ENCODE measurements at regions of chr15 and their contacts with region 1.

Region 1: GRCh38 chr15:31435261-31435911 is 108.8 kb downstream of the KLF13 start:
- DNase-seq: peak; percentile 87
- ATAC-seq: peak; percentile 85
- H3K4me3 ChIP-seq: peak overlapping the region; percentile 48
- H3K27ac ChIP-seq: peak overlapping the region; percentile 95
- H3K4me1 ChIP-seq: peaks cover 50% of the 10 kb centered on the region
- H3K27me3 ChIP-seq: no peaks in the 10 kb centered on the region
- CTCF ChIP-seq: peak; percentile 85 to 100 (median 92); a peak in 5 of 6 replicates
- EP300 ChIP-seq: peak in 1 of 2 experiments; percentile 43; a peak in 1 of 4 replicates
- POLR2A ChIP-seq: peak; percentile 31
- RAD21 ChIP-seq: peak; percentile 86

Region 2: DNA sequence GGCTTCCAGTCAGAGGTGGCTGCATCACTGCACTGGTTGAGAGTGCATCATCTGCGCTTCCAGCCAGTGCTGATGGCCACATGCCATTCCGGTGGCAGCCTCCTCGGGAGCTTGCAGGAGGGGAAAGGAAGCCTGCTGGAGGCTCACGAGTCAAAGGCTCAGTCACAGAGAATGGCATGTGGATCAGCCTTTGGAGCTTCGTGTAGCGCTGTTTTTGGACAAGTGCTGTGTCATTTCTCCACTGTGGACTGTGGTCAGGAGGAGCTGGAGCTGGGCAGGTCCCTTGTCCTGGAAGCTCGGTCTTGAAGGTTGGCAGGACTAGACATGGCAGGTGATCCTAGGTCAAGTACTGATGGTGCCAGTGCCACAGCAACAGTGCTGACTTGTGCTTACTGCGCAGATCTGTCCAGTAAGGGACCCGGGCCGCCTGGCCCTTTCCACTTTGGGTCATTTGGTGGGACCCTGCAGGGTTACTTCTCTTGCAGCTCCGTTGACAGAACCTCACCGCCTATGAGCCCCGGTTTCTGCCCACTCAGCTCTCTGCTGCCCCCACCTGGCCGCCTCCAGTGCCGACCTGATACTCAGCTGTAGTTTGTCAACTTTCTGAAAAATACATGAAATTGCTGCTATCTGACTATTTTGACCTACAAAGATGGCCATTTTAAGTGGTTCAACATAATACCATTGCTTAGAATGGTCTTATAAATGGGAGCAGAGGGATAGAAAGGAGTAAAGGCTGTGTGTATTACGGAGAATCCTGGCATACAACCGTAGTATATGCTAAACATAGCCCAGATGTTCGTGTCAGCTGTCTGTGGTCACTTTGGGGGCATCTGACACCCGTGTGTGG is 306.2 kb before region 1 on chr15:
- CTCF ChIA-PET with region 1: interaction called, 12 read pairs
- POLR2A ChIA-PET with region 1: no interaction called
- RAD21 ChIA-PET with region 1: interaction called, 6 read pairs
- SMC1A ChIA-PET with region 1: no interaction called
- in situ Hi-C with region 1: no loop called
- intact Hi-C with region 1: no loop called
- DNase-seq: no peak
- ATAC-seq: peak; percentile 98
- H3K4me3 ChIP-seq: no peak overlapping the region
- H3K27ac ChIP-seq: no peak overlapping the region
- H3K4me1 ChIP-seq: no peaks in the 10 kb centered on the region
- H3K27me3 ChIP-seq: no peaks in the 10 kb centered on the region; a peak in 1 of 4 replicates
- CTCF ChIP-seq: peak; percentile 81 to 98 (median 96)
- EP300 ChIP-seq: no peak
- POLR2A ChIP-seq: no peak
- RAD21 ChIP-seq: peak; percentile 96

Region 3: GRCh38 chr15:31228985-31229826 is 206.2 kb before region 1 on chr15:
- CTCF ChIA-PET with region 1: interaction called, 12 read pairs
- POLR2A ChIA-PET with region 1: interaction called, 6 read pairs
- RAD21 ChIA-PET with region 1: interaction called, 27 read pairs
- SMC1A ChIA-PET with region 1: interaction called, 8 read pairs
- in situ Hi-C with region 1: no loop called
- intact Hi-C with region 1: loop called (anchors 5 kb)
- DNase-seq: peak; percentile 91
- ATAC-seq: peak; percentile 83
- H3K4me3 ChIP-seq: peak overlapping the region; percentile 86
- H3K27ac ChIP-seq: peak overlapping the region; percentile 80
- H3K4me1 ChIP-seq: peaks cover 37% of the 10 kb centered on the region
- H3K27me3 ChIP-seq: no peaks in the 10 kb centered on the region
- CTCF ChIP-seq: no peak
- EP300 ChIP-seq: 0 out of 4 replicates have a peak, but pooled peaks of 1 of the 2 experiments have one; percentile 27
- POLR2A ChIP-seq: peak; percentile 85
- RAD21 ChIP-seq: no peak

Region 4: DNA sequence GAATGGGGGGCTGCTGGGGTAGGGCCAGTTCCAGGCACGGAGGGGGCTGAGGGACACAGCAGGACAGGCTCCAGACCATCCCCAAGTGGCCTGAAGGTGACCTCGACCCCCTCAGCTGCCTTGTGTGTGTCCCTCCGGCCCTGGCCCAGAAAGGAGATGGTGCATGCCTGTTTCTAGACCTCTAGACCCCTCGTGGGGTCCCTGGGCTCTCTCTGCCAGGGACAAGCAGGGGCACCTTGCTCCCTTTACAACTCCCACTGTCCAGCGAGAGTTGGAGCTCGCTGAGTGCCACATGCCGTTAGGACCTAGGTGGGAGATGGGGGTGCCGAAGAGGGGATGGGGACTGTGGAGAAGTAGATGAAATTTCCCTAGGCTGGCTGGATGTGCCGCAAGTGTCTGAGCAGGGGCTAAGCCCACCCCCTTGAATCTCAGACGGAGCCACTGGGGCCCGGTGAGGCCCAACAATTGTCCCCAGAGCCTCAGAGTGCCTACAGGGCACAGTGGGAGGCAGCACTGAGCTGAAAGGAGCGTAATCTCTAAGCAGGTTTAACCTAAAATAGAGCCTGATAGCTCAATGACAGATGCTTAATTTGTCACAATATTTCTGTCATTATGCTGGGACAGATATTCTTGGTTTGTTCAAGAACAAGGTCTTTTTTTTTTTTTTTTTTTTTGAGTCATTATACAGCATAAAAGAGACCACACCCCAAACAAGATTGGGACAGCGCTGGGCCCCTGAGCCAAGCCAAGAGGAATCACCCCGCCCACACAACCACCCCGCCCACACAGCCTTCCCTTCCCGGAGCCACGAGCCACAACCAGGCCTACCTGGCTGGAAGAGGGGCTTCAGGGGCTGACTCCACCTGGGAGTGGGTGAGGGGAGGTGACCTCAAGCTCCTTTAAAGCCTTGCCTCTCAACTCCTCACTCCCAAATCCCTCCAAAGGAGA is 132.3 kb before region 1 on chr15:
- CTCF ChIA-PET with region 1: interaction called, 8 read pairs
- POLR2A ChIA-PET with region 1: interaction called, 4 read pairs
- RAD21 ChIA-PET with region 1: interaction called, 15 read pairs
- SMC1A ChIA-PET with region 1: interaction called, 8 read pairs
- in situ Hi-C with region 1: no loop called
- intact Hi-C with region 1: no loop called
- DNase-seq: no peak
- ATAC-seq: peak; percentile 76
- H3K4me3 ChIP-seq: no peak overlapping the region
- H3K27ac ChIP-seq: no peak overlapping the region
- H3K4me1 ChIP-seq: peaks cover 19% of the 10 kb centered on the region
- H3K27me3 ChIP-seq: no peaks in the 10 kb centered on the region
- CTCF ChIP-seq: peak; percentile 19 to 34 (median 31); a peak in 5 of 6 replicates
- EP300 ChIP-seq: no peak
- POLR2A ChIP-seq: no peak
- RAD21 ChIP-seq: peak; percentile 40; the same call in 1 of the 2 replicates

Region 5: GRCh38 chr15:31344823-31345605 is 90.4 kb before region 1 on chr15:
- CTCF ChIA-PET with region 1: interaction called, 11 read pairs
- POLR2A ChIA-PET with region 1: interaction called, 3 read pairs
- RAD21 ChIA-PET with region 1: interaction called, 18 read pairs
- SMC1A ChIA-PET with region 1: interaction called, 6 read pairs
- in situ Hi-C with region 1: no loop called
- intact Hi-C with region 1: no loop called
- DNase-seq: no peak
- ATAC-seq: peak; percentile 68
- H3K4me3 ChIP-seq: peak overlapping the region; percentile 80
- H3K27ac ChIP-seq: peak overlapping the region; percentile 96
- H3K4me1 ChIP-seq: peaks cover 87% of the 10 kb centered on the region
- H3K27me3 ChIP-seq: no peaks in the 10 kb centered on the region
- CTCF ChIP-seq: no peak
- EP300 ChIP-seq: no peak
- POLR2A ChIP-seq: peak; percentile 65
- RAD21 ChIP-seq: no peak

Region 6: DNA sequence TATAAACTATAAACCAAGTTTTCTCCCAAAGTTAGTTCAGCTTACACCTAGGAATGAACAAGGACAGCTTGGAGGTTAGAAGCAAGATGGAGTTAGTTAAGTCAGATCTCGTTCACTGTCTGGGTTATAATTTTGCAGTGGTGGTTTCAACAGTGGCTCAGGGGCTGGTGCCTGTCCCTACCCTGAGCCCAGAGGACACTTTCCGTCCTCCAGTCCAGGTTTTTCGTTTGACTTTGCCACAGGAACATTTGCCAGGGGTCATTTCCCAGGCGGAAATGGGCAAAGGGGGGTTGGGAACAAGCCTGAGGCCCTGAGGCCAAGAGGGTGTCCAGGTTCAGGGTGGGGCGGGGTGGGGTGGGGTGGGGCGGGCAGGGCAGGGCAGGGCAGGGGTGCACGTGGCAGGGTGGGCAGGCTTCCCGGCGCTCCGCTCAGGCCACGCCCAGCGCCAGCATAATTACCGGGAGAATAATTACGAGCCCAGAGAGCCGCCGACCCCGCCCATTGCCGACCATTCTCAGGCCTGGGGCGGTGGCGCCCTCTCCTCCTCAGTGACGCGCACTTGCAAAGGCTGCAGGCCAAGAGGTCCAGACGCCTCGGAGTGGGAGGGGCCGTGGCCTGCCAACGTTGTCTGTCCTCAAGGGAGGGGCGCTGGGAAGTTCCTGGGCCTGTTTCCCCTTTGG is 38.4 kb before region 1 on chr15:
- CTCF ChIA-PET with region 1: interaction called, 6 read pairs
- POLR2A ChIA-PET with region 1: no interaction called
- RAD21 ChIA-PET with region 1: interaction called, 8 read pairs
- SMC1A ChIA-PET with region 1: interaction called, 4 read pairs
- in situ Hi-C with region 1: no loop called
- intact Hi-C with region 1: loop called (anchors 2 kb)
- DNase-seq: no peak
- ATAC-seq: no peak
- H3K4me3 ChIP-seq: no peak overlapping the region
- H3K27ac ChIP-seq: no peak overlapping the region
- H3K4me1 ChIP-seq: peaks cover 3% of the 10 kb centered on the region; the same call in 1 of the 2 replicates
- H3K27me3 ChIP-seq: peaks cover 0 to 1% of the 10 kb centered on the region in 2 experiments; a peak in 1 of 4 replicates
- CTCF ChIP-seq: no peak
- EP300 ChIP-seq: no peak
- POLR2A ChIP-seq: no peak
- RAD21 ChIP-seq: 0 out of 2 replicates have a peak, but pooled peaks have one; percentile 17

Region 7: GRCh38 chr15:31472636-31473384 is 37.4 kb after region 1 on chr15:
- CTCF ChIA-PET with region 1: interaction called, 63 read pairs
- POLR2A ChIA-PET with region 1: interaction called, 11 read pairs
- RAD21 ChIA-PET with region 1: interaction called, 83 read pairs
- SMC1A ChIA-PET with region 1: interaction called, 14 read pairs
- in situ Hi-C with region 1: no loop called
- intact Hi-C with region 1: loop called (anchors 5 kb)
- DNase-seq: peak; percentile 79
- ATAC-seq: peak; percentile 94
- H3K4me3 ChIP-seq: peak overlapping the region; percentile 50
- H3K27ac ChIP-seq: peak overlapping the region; percentile 92
- H3K4me1 ChIP-seq: peaks cover 37% of the 10 kb centered on the region
- H3K27me3 ChIP-seq: no peaks in the 10 kb centered on the region
- CTCF ChIP-seq: 0 out of 6 replicates have a peak, but pooled peaks of 1 of the 3 experiments have one; percentile 2
- EP300 ChIP-seq: peak in 1 of 2 experiments; percentile 17; a peak in 1 of 4 replicates
- POLR2A ChIP-seq: peak; percentile 68
- RAD21 ChIP-seq: 0 out of 2 replicates have a peak, but pooled peaks have one; percentile 13

Region 8: GRCh38 chr15:31540633-31541032 is 105.2 kb after region 1 on chr15:
- CTCF ChIA-PET with region 1: no interaction called
- POLR2A ChIA-PET with region 1: no interaction called
- RAD21 ChIA-PET with region 1: no interaction called
- SMC1A ChIA-PET with region 1: no interaction called
- in situ Hi-C with region 1: no loop called
- intact Hi-C with region 1: no loop called
- DNase-seq: no peak
- ATAC-seq: no peak
- H3K4me3 ChIP-seq: no peak overlapping the region
- H3K27ac ChIP-seq: no peak overlapping the region
- H3K4me1 ChIP-seq: no peaks in the 10 kb centered on the region
- H3K27me3 ChIP-seq: no peaks in the 10 kb centered on the region; a peak in 1 of 4 replicates
- CTCF ChIP-seq: no peak
- EP300 ChIP-seq: no peak
- POLR2A ChIP-seq: no peak
- RAD21 ChIP-seq: no peak

Region 9: DNA sequence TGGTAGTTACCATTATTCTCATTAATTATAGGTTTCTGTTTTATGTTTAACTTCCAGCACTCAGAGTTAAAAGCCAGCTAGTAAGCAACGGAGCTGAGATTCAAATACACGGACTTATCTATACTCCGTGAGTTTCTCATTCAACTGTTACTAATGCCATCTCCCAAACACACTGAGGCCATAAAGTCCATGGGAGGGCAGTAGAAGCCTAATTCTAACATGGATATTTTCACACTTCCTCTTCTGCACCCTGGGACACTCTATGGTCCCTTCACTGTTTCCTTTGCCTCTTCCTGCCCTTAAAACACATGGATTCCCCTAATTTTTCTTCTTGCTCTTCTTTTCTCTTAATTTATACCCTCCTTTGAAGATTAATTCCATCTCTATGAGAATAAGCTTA is 136.3 kb after region 1 on chr15:
- CTCF ChIA-PET with region 1: no interaction called
- POLR2A ChIA-PET with region 1: no interaction called
- RAD21 ChIA-PET with region 1: no interaction called
- SMC1A ChIA-PET with region 1: no interaction called
- in situ Hi-C with region 1: no loop called
- intact Hi-C with region 1: no loop called
- DNase-seq: no peak
- ATAC-seq: no peak
- H3K4me3 ChIP-seq: no peak overlapping the region
- H3K27ac ChIP-seq: no peak overlapping the region
- H3K4me1 ChIP-seq: no peaks in the 10 kb centered on the region
- H3K27me3 ChIP-seq: no peaks in the 10 kb centered on the region
- CTCF ChIP-seq: no peak; a peak in 1 of 6 replicates
- EP300 ChIP-seq: no peak
- POLR2A ChIP-seq: no peak
- RAD21 ChIP-seq: 0 out of 2 replicates have a peak, but pooled peaks have one; percentile 5